ENCODE measurements at regions of chr4 and their contacts with region 1.

Region 1: DNA sequence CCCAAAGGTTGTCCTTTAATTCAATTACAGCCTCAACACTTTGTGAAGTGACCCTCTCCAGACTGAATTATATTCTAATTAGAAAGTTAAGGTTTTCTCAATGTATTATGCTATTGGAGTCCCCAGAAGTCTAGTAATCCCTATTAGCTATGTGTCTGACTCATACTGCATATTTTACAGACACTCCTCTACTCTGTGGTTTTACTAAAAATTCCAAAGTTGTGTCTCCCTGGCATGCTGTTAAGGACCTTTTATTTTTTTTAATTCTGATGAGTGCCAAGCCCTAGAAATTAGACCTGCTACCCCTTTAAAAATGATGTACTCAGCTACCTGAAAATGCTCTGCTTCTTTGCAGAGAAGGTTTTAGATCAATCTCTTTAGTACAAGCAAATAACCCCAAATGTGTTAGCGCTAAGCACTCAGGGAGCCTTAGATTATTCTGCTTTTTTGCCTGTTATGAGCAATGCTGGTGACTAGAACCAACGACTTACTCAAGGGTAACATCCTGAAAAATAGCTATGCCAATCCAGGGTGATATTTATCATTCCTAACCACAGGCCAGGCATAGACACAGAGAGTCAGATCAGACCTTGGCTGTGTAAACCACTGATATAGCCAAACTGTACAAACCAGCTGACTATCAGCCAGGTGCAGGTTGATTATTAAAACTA is 26.1 kb upstream of the CXCL13 start:
- DNase-seq: no peak
- ATAC-seq: no peak
- H3K4me3 ChIP-seq: no peak overlapping the region
- H3K4me3 Mint-ChIP-seq: no peak overlapping the region
- H3K27ac ChIP-seq: no peak overlapping the region
- H3K27ac Mint-ChIP-seq: no peak overlapping the region
- H3K4me1 ChIP-seq: no peaks in the 10 kb centered on the region
- H3K4me1 Mint-ChIP-seq: peaks cover 0 to 16% (median 0%) of the 10 kb centered on the region in 7 donors
- H3K27me3 ChIP-seq: no peaks in the 10 kb centered on the region
- H3K27me3 Mint-ChIP-seq: peaks cover 0 to 20% (median 0%) of the 10 kb centered on the region in 5 donors

Region 2: GRCh38 chr4:77240469-77241066 is 339.0 kb before region 1 on chr4:
- CTCF ChIA-PET with region 1: no interaction called
- POLR2A ChIA-PET with region 1: no interaction called
- intact Hi-C with region 1: no loop called
- DNase-seq: peak in 8 of 9 donors; percentile 11 to 59 (median 30)
- ATAC-seq: peak; percentile 47
- H3K4me3 ChIP-seq: no peak overlapping the region
- H3K4me3 Mint-ChIP-seq: no peak overlapping the region
- H3K27ac ChIP-seq: no peak overlapping the region
- H3K27ac Mint-ChIP-seq: peak overlapping the region in 1 of 9 donors; percentile 10
- H3K4me1 ChIP-seq: no peaks in the 10 kb centered on the region
- H3K4me1 Mint-ChIP-seq: no peaks in the 10 kb centered on the region
- H3K27me3 ChIP-seq: no peaks in the 10 kb centered on the region
- H3K27me3 Mint-ChIP-seq: peaks cover 3 to 12% (median 6%) of the 10 kb centered on the region in 5 donors

Region 3: DNA sequence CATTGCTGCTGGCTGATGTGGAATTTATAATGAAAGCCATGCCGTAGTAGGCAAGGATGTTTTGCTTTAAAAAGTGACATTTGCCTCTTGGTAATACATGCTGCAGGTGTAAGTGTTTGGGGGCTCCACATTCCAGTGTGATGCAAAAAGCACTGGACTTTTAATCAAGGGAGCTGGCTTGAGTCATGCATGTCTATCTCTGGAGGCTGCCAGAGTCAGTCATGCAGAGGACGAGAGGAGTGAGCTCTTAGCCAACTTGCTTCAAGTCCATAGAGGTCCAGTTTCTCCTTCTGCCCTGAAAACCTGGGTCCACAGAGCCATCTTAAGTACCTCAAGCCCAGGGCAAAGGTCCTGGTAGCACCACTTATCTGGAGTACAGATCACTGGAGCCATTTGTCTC is 14.5 kb after region 1 on chr4:
- CTCF ChIA-PET with region 1: no interaction called
- POLR2A ChIA-PET with region 1: no interaction called
- intact Hi-C with region 1: loop called in 1 of 2 experiments (anchors 2 kb)
- DNase-seq: no peak
- ATAC-seq: no peak
- H3K4me3 ChIP-seq: no peak overlapping the region
- H3K4me3 Mint-ChIP-seq: no peak overlapping the region
- H3K27ac ChIP-seq: no peak overlapping the region
- H3K27ac Mint-ChIP-seq: no peak overlapping the region
- H3K4me1 ChIP-seq: peaks cover 0 to 13% of the 10 kb centered on the region in 2 donors
- H3K4me1 Mint-ChIP-seq: peaks cover 0 to 33% (median 0%) of the 10 kb centered on the region in 7 donors
- H3K27me3 ChIP-seq: no peaks in the 10 kb centered on the region
- H3K27me3 Mint-ChIP-seq: peaks cover 2 to 14% (median 4%) of the 10 kb centered on the region in 5 donors

Region 4: GRCh38 chr4:77734928-77735327 is 155.4 kb after region 1 on chr4:
- CTCF ChIA-PET with region 1: no interaction called
- POLR2A ChIA-PET with region 1: no interaction called
- intact Hi-C with region 1: no loop called
- DNase-seq: peak in 8 of 9 donors; percentile 9 to 34 (median 18)
- ATAC-seq: peak; percentile 80
- H3K4me3 ChIP-seq: no peak overlapping the region
- H3K4me3 Mint-ChIP-seq: peak overlapping the region in 9 of 10 donors; percentile 53 to 83 (median 71)
- H3K27ac ChIP-seq: peak overlapping the region; percentile 25
- H3K27ac Mint-ChIP-seq: peak overlapping the region; percentile 18 to 90 (median 81)
- H3K4me1 ChIP-seq: peaks cover 14 to 17% of the 10 kb centered on the region in 2 donors
- H3K4me1 Mint-ChIP-seq: peaks cover 36 to 85% (median 73%) of the 10 kb centered on the region in 7 donors
- H3K27me3 ChIP-seq: no peaks in the 10 kb centered on the region
- H3K27me3 Mint-ChIP-seq: no peaks in the 10 kb centered on the region